ENCODE measurements at regions of chr19 and their contacts with region 1.

Region 1: GRCh38 chr19:19643158-19644053 is at the start of gene GMIP:
- DNase-seq: peak; percentile 29
- ATAC-seq: peak; percentile 89
- H3K4me3 ChIP-seq: peak within 1 kb of the TSS; percentile 69
- H3K27ac ChIP-seq: peak within 1 kb of the TSS; percentile 37
- H3K4me1 ChIP-seq: 0 out of 2 replicates have a peak, but pooled peaks cover 2% of the 10 kb centered on the region
- H3K27me3 ChIP-seq: no peaks in the 10 kb centered on the region
- CTCF ChIP-seq: peak; percentile 80
- POLR2A ChIP-seq: no peak
- RAD21 ChIP-seq: peak; percentile 88
- total RNA-seq, gene GMIP: 4.1 and 4.4 TPM in 2 replicates

Region 2: GRCh38 chr19:19385108-19385899 is 258.1 kb before region 1 on chr19:
- CTCF ChIA-PET with region 1: no interaction called
- POLR2A ChIA-PET with region 1: no interaction called
- dilution Hi-C with region 1: no loop called
- in situ Hi-C with region 1: loop called (anchors 25 kb)
- intact Hi-C with region 1: no loop called
- DNase-seq: peak; percentile 100
- ATAC-seq: peak; percentile 96
- H3K4me3 ChIP-seq: peak overlapping the region; percentile 71
- H3K27ac ChIP-seq: peak overlapping the region; percentile 55
- H3K4me1 ChIP-seq: peaks cover 8% of the 10 kb centered on the region
- H3K27me3 ChIP-seq: no peaks in the 10 kb centered on the region
- CTCF ChIP-seq: peak; percentile 20; the same call in 1 of the 2 replicates
- POLR2A ChIP-seq: peak; percentile 74
- RAD21 ChIP-seq: no peak

Region 3: GRCh38 chr19:19531951-19532805 is 111.2 kb before region 1 on chr19:
- CTCF ChIA-PET with region 1: interaction called, 11 read pairs
- POLR2A ChIA-PET with region 1: no interaction called
- dilution Hi-C with region 1: no loop called
- in situ Hi-C with region 1: loop called (anchors 5 kb)
- intact Hi-C with region 1: loop called (anchors 1 kb)
- DNase-seq: peak; percentile 44
- ATAC-seq: peak; percentile 81
- H3K4me3 ChIP-seq: no peak overlapping the region
- H3K27ac ChIP-seq: no peak overlapping the region
- H3K4me1 ChIP-seq: peaks cover 5% of the 10 kb centered on the region
- H3K27me3 ChIP-seq: no peaks in the 10 kb centered on the region
- CTCF ChIP-seq: peak; percentile 96
- POLR2A ChIP-seq: peak; percentile 59; the same call in 1 of the 2 replicates
- RAD21 ChIP-seq: peak; percentile 95

Region 4: DNA sequence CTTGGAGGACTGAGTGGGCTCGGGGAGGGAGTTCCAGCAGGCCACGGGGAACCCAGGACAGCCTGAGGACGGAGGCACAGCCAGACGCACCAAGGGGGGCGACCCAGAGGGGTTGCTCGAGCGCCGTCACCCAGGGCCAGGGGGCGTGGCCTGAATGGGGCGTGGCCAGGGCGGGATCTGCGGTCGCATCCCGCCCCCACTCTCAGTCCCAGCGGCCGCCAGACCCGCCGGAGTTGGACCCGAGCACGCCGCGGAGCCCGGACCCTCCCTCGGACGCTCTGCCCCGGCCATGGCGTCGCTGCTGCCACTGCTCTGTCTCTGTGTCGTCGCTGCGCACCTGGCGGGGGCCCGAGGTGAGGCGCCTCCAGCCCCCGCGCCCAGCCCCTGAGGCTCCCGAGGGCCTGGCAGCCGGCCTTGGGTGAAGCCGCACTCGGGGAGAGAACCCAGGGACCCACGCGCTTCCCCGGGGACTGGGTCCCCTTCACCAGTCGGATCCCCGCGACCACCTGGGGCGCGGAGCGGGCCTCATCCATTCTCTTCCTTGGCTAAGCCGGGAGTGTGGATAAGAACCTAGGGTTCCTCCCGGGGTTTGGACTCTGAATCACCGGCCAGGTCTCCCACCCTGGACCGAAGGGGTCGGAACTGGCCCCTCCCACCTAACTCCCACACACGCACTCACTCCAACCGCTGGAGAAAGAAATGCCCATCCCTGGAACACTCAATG is 105.2 kb before region 1 on chr19 and contains the start of gene CILP2:
- CTCF ChIA-PET with region 1: interaction called, 11 read pairs
- POLR2A ChIA-PET with region 1: no interaction called
- dilution Hi-C with region 1: no loop called
- in situ Hi-C with region 1: loop called (anchors 5 kb)
- intact Hi-C with region 1: no loop called
- DNase-seq: no peak
- ATAC-seq: peak; percentile 52
- H3K4me3 ChIP-seq: no peak within 1 kb of the TSS
- H3K27ac ChIP-seq: no peak within 1 kb of the TSS
- H3K4me1 ChIP-seq: no peaks in the 10 kb centered on the region; the same call in 1 of the 2 replicates
- H3K27me3 ChIP-seq: peaks cover 25% of the 10 kb centered on the region
- CTCF ChIP-seq: no peak
- POLR2A ChIP-seq: no peak
- RAD21 ChIP-seq: no peak
- total RNA-seq, gene CILP2: 0.18 and 0.28 TPM in 2 replicates

Region 5: GRCh38 chr19:19554074-19555023 is 89.1 kb before region 1 on chr19:
- CTCF ChIA-PET with region 1: interaction called, 3 read pairs
- POLR2A ChIA-PET with region 1: no interaction called
- dilution Hi-C with region 1: no loop called
- in situ Hi-C with region 1: no loop called
- intact Hi-C with region 1: loop called (anchors 5 kb)
- DNase-seq: peak; percentile 21
- ATAC-seq: peak; percentile 65
- H3K4me3 ChIP-seq: no peak overlapping the region
- H3K27ac ChIP-seq: no peak overlapping the region
- H3K4me1 ChIP-seq: no peaks in the 10 kb centered on the region
- H3K27me3 ChIP-seq: no peaks in the 10 kb centered on the region
- CTCF ChIP-seq: peak; percentile 61
- POLR2A ChIP-seq: no peak
- RAD21 ChIP-seq: peak; percentile 48

Region 6: GRCh38 chr19:19732579-19733501 is 89.4 kb after region 1 on chr19 and contains the start of gene ZNF14:
- CTCF ChIA-PET with region 1: no interaction called
- POLR2A ChIA-PET with region 1: no interaction called
- dilution Hi-C with region 1: no loop called
- in situ Hi-C with region 1: no loop called
- intact Hi-C with region 1: no loop called
- DNase-seq: peak; percentile 90
- ATAC-seq: peak; percentile 100
- H3K4me3 ChIP-seq: peak within 1 kb of the TSS; percentile 95
- H3K27ac ChIP-seq: peak within 1 kb of the TSS; percentile 75
- H3K4me1 ChIP-seq: no peaks in the 10 kb centered on the region
- H3K27me3 ChIP-seq: no peaks in the 10 kb centered on the region
- CTCF ChIP-seq: 0 out of 2 replicates have a peak, but pooled peaks have one; percentile 6
- POLR2A ChIP-seq: no peak
- RAD21 ChIP-seq: no peak
- total RNA-seq, gene ZNF14: 5.4 and 5.6 TPM in 2 replicates